Right cardiac atrium (tissue), 5 donors: ENCODE measurements at regions of chr4 and their contacts with region 1.

Region 1: GRCh38 chr4:20422398-20422797 is 170.7 kb downstream of the SLIT2 start:
- DNase-seq: peak in 2 of 3 donors; percentile 20 to 43
- ATAC-seq: peak; percentile 85 to 86
- H3K4me3 ChIP-seq: no peak overlapping the region
- H3K27ac ChIP-seq: no peak overlapping the region
- H3K4me1 ChIP-seq: no peaks in the 10 kb centered on the region
- H3K27me3 ChIP-seq: no peaks in the 10 kb centered on the region

Region 2: DNA sequence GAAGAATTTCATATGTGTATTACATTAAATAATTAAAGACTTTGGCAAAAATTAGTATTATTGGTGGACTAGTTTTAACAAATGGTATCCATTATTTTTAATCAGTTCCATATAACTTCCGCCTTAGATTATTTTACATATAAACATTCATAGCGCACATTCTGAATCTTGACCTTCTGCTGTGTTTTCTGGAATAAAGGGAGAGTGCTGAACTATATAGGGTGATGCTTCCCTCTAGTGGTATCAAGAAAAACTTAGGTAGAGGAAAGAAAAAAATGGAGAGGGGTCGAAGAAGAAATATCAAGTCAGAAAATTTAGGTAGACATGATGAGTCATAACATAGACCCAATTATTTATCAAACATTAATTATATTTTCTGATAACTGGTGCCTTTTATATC is 122.2 kb after region 1 on chr4:
- intact Hi-C with region 1: loop called (anchors 2 to 10 kb)
- DNase-seq: no peak
- ATAC-seq: peak; percentile 48 to 57
- H3K4me3 ChIP-seq: no peak overlapping the region
- H3K27ac ChIP-seq: no peak overlapping the region
- H3K4me1 ChIP-seq: no peaks in the 10 kb centered on the region
- H3K27me3 ChIP-seq: no peaks in the 10 kb centered on the region

Region 3: DNA sequence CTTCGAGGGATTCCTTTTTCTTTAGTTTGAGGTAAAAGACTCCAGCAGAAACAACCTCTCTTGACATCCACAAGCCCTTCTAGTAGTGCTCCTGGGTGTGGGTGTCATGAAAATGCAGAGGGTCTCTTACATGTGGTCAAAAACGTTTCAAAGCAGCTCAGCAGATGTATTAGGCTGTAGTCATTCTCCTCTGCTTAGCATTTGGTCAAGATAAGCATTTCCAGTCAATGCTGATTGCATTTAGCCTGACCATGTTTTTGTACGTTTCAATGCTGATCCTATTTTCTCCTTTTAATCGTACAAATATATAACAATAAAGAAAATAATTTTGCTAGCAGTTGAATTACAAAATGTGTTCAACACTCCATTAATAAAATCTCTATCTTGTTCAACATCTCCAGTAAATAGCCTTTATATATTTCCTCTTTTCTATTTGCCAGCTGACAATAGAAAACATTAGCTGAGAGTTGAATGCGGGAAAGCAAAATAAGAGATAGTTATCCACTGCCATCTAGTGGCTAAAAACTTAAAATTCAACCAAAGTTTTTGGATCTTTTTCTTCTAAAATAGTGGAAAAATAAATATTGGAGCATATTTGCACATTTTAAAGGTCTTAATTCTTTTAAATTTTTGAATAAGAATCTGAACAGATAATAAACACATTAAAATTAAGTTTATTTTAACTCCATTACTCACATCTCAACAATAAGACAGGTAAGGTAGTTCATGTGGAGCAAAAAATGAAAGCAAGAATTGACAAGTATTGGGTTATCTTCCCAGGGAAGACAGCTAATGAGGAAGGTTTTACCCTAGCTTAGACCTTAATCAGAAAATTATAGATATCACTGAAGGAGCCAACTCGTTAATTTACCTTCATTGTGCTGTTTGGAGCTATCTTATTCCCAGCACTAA is 262.7 kb after region 1 on chr4:
- intact Hi-C with region 1: loop called (anchors 5 to 10 kb)
- DNase-seq: no peak
- ATAC-seq: no peak
- H3K4me3 ChIP-seq: no peak overlapping the region
- H3K27ac ChIP-seq: no peak overlapping the region
- H3K4me1 ChIP-seq: no peaks in the 10 kb centered on the region
- H3K27me3 ChIP-seq: no peaks in the 10 kb centered on the region

Region 4: GRCh38 chr4:21451032-21451431 is 1028.6 kb after region 1 on chr4:
- intact Hi-C with region 1: no loop called
- DNase-seq: no peak
- ATAC-seq: no peak
- H3K4me3 ChIP-seq: no peak overlapping the region
- H3K27ac ChIP-seq: no peak overlapping the region
- H3K4me1 ChIP-seq: no peaks in the 10 kb centered on the region
- H3K27me3 ChIP-seq: no peaks in the 10 kb centered on the region